Calu3 (cell line): ENCODE measurements at regions of chr7 and their contacts with region 1.

Region 1: DNA sequence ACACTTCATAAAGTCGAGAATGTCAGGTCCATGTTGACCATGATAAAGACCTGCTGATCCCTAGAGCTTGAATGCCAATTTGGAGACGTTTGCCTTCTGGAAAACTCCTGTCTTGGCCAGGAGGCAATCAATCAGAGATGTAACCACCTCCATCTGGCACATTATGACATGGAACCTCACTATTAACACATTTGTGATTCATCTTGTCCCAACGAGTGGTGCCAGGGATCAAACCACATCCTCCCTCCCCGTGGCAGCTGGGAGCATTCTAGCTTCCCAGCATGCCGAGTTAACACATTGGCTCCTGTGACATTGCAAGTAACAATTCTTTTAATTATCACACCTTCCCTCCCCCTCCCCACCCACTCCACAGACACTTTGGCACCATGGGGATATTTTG is 84.0 kb upstream of the PPP1R17 start:
- DNase-seq: no peak
- H3K4me3 Mint-ChIP-seq: no peak overlapping the region
- H3K27ac Mint-ChIP-seq: no peak overlapping the region
- H3K4me1 Mint-ChIP-seq: peaks cover 14% of the 10 kb centered on the region
- H3K27me3 Mint-ChIP-seq: no peaks in the 10 kb centered on the region
- CTCF ChIP-seq: no peak

Region 2: GRCh38 chr7:31569528-31569927 is 33.5 kb before region 1 on chr7:
- CTCF ChIA-PET with region 1: no interaction called
- intact Hi-C with region 1: loop called (anchors 1 kb)
- DNase-seq: no peak
- H3K4me3 Mint-ChIP-seq: no peak overlapping the region
- H3K27ac Mint-ChIP-seq: no peak overlapping the region
- H3K4me1 Mint-ChIP-seq: no peaks in the 10 kb centered on the region
- H3K27me3 Mint-ChIP-seq: no peaks in the 10 kb centered on the region
- CTCF ChIP-seq: no peak